ENCODE measurements at regions of chr15 and their contacts with region 1.

Region 1: DNA sequence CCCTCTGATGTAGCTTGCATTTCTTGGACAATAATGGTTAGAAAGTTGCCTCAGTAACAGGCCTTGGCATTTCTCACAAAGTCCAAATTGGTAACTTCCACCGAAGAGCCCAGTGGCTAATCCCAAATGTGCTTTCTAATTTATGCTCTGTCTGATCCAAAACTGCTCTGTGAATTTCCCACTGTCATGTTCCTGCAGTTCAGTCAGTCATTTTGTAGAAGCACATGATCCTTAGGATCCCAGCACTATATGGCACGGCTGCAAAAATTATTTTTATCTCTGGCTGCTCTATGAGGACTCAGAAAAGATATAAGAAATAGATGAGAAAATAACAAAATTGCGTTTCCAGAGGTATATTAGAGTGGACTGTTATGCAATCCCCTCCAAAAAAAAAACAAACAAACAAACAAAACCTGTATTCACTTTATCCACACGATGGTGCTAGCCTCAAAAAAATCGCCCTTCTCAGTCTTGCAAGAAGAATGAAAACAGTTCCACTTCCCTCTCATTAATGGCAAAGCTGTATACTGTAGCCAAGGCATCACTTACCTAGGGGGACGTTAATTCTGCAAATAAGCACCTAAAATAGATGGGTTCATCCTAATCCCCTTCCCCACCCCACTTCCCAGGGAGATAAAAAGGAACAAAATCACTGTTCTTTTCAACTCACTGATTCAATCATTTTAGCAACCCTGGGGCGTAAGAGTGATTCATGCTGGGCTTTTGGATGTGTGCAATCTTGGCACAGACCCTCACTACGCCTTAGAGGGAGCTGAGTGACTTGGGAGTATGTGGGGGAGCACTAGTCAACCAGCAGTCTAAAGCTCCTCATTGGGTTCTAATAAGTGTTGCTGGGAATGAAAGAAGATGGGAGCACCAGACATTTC is 61.3 kb downstream of the TMCO5A start:
- DNase-seq: peak; percentile 76
- H3K4me3 ChIP-seq: no peak overlapping the region
- H3K27ac ChIP-seq: no peak overlapping the region
- H3K4me1 ChIP-seq: no peaks in the 10 kb centered on the region
- CTCF ChIP-seq: peak; percentile 93

Region 2: GRCh38 chr15:38050529-38051448 is 55.1 kb after region 1 on chr15:
- CTCF ChIA-PET with region 1: no interaction called
- POLR2A ChIA-PET with region 1: no interaction called
- intact Hi-C with region 1: no loop called
- DNase-seq: no peak
- H3K4me3 ChIP-seq: no peak overlapping the region
- H3K27ac ChIP-seq: no peak overlapping the region
- H3K4me1 ChIP-seq: no peaks in the 10 kb centered on the region
- CTCF ChIP-seq: no peak

Region 3: GRCh38 chr15:38354315-38354929 is 358.7 kb after region 1 on chr15:
- CTCF ChIA-PET with region 1: no interaction called
- POLR2A ChIA-PET with region 1: interaction called, 3 read pairs
- intact Hi-C with region 1: loop called (anchors 2 kb)
- DNase-seq: peak; percentile 74
- H3K4me3 ChIP-seq: no peak overlapping the region
- H3K27ac ChIP-seq: no peak overlapping the region
- H3K4me1 ChIP-seq: no peaks in the 10 kb centered on the region
- CTCF ChIP-seq: peak; percentile 95

Region 4: GRCh38 chr15:38389924-38390542 is 394.3 kb after region 1 on chr15:
- CTCF ChIA-PET with region 1: interaction called, 3 read pairs
- POLR2A ChIA-PET with region 1: no interaction called
- intact Hi-C with region 1: loop called (anchors 2 kb)
- DNase-seq: peak; percentile 68
- H3K4me3 ChIP-seq: no peak overlapping the region
- H3K27ac ChIP-seq: no peak overlapping the region
- H3K4me1 ChIP-seq: no peaks in the 10 kb centered on the region
- CTCF ChIP-seq: peak; percentile 95

Region 5: GRCh38 chr15:38554354-38554753 is 558.6 kb after region 1 on chr15:
- CTCF ChIA-PET with region 1: no interaction called
- POLR2A ChIA-PET with region 1: no interaction called
- intact Hi-C with region 1: loop called (anchors 5 kb)
- DNase-seq: no peak
- H3K4me3 ChIP-seq: no peak overlapping the region
- H3K27ac ChIP-seq: no peak overlapping the region
- H3K4me1 ChIP-seq: no peaks in the 10 kb centered on the region
- CTCF ChIP-seq: no peak

Region 6: DNA sequence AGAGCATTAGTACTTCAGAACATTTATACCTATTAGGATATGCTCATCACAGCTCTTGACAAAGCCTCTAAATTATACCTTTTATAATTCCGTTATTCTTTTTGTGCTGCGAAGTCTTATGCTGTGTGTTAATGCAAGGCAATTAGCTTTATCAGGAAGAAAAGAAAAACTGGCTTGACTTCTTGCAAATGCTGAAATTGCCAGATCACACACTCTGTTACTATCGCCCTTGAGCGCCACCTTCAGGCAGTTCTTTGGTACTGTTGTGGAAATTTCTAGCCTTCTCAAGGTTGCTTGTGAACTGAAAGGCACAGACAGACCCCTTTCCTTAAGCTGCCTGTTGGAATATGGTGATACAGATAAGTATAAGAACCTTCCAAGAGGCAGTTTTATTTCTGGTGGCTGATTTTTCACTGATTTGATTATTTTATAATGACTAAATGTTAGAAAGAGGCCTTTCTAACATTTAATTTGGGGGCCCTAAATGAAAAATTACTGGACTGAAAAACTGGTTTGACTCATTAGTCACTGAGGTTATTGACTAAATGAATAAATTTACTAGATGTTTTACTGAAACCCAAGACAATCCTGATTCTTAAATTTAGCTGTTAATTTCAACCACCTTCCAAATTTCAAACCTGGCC is 695.1 kb after region 1 on chr15:
- CTCF ChIA-PET with region 1: no interaction called
- POLR2A ChIA-PET with region 1: no interaction called
- intact Hi-C with region 1: loop called (anchors 5 kb)
- DNase-seq: peak; percentile 83
- H3K4me3 ChIP-seq: no peak overlapping the region
- H3K27ac ChIP-seq: no peak overlapping the region
- H3K4me1 ChIP-seq: peaks cover 27% of the 10 kb centered on the region
- CTCF ChIP-seq: peak; percentile 97

Measured in OCI-LY7 (cell line).